Heart left ventricle (tissue), 16 donors: ENCODE measurements at regions of chr22 and their contacts with region 1.

Region 1: DNA sequence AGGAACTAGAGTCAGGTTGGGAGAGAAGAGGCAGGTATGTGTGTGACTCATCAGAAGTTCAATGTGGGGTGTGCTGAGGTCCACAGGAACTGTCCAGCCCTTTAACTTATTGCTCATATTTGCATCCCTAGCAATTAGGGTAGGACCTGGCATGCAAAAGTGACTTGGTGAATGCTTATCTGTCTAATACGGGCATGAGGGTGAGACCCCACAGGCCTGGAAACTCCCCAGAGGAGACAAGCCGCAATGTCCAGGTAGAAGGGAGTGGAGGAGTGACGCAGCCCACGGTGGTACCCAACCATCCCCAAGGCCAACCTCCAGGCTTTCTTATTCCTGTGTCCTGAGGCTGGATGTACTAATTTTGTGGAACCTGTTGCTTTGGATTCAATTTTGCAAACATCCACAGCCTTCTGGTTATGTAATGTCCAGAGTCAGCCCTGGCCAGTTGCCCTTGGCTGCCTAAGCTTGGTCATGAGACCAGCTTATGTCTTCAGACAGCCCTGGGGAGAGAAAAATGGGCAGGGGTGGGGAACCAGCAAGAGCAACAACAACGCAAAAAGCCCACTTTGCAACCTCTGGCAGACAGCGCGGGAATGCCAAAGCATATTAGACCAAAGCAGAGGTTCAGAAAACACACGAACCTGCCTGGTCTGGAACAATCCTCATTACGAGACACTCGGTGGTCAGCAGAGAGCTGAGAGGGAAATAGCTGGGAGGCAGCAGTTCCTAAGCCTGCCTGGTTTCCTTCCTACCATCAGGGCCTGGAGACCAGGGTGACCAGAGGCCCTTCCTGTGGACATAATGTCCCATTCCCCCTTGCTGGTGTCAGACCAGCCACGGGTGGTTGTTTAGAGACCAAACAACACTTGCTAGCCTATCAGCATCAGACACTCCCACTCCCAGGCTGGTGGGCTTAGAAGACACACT is 49.3 kb downstream of the TIMP3 start:
- DNase-seq: peak; percentile 67 to 89 (median 77)
- ATAC-seq: peak; percentile 23 to 53 (median 28)
- H3K4me3 ChIP-seq: no peak overlapping the region
- H3K27ac ChIP-seq: peak overlapping the region; percentile 69 to 94 (median 83)
- H3K4me1 ChIP-seq: peaks cover 41 to 100% (median 85%) of the 10 kb centered on the region in 12 donors
- H3K27me3 ChIP-seq: no peaks in the 10 kb centered on the region
- CTCF ChIP-seq: no peak
- POLR2A ChIP-seq: no peak

Region 2: GRCh38 chr22:32803020-32803754 is 47.7 kb before region 1 on chr22:
- intact Hi-C with region 1: loop called in 6 of 10 experiments (anchors 1 to 5 kb)
- DNase-seq: peak in 2 of 5 donors; percentile 54 to 61
- ATAC-seq: peak; percentile 20 to 40 (median 31)
- H3K4me3 ChIP-seq: peak overlapping the region; percentile 64 to 99 (median 94)
- H3K27ac ChIP-seq: peak overlapping the region; percentile 77 to 94 (median 92)
- H3K4me1 ChIP-seq: peaks cover 0 to 68% (median 44%) of the 10 kb centered on the region in 12 donors
- H3K27me3 ChIP-seq: peaks cover 0 to 14% (median 0%) of the 10 kb centered on the region in 9 donors
- CTCF ChIP-seq: no peak
- POLR2A ChIP-seq: no peak

Region 3: DNA sequence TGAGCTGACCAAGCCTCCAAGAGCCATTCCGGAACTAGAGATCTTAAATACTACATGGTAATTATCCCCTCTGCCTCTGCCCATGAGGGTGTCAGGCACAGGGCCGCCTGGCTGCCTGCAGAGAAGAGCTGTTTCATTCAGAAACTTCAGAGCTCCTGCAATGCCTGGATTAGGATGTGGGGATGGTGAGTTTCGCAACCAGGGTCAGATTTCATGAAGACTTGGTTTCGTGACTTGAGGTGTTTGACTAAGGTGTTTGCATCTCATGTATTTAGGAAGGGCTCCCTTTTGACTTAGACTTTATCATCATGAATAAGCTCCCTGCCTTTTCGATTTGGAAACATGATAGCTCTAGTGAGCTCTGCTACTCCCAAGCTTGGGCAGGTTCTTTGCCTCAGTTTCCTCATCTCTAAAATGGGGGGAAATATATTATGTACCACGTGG is 40.3 kb before region 1 on chr22:
- intact Hi-C with region 1: loop called in 1 of 10 experiments (anchors 2 kb)
- DNase-seq: no peak
- ATAC-seq: no peak
- H3K4me3 ChIP-seq: no peak overlapping the region
- H3K27ac ChIP-seq: peak overlapping the region in 10 of 12 donors; percentile 25 to 62 (median 47)
- H3K4me1 ChIP-seq: peaks cover 29 to 96% (median 86%) of the 10 kb centered on the region in 12 donors
- H3K27me3 ChIP-seq: no peaks in the 10 kb centered on the region
- CTCF ChIP-seq: no peak
- POLR2A ChIP-seq: no peak

Region 4: GRCh38 chr22:32830473-32830872 is 20.4 kb before region 1 on chr22:
- intact Hi-C with region 1: loop called in 2 of 10 experiments (anchors 2 kb)
- DNase-seq: peak; percentile 62 to 80 (median 72)
- ATAC-seq: peak; percentile 60 to 78 (median 63)
- H3K4me3 ChIP-seq: no peak overlapping the region
- H3K27ac ChIP-seq: peak overlapping the region; percentile 51 to 83 (median 70)
- H3K4me1 ChIP-seq: peaks cover 29 to 100% (median 89%) of the 10 kb centered on the region in 12 donors
- H3K27me3 ChIP-seq: no peaks in the 10 kb centered on the region
- CTCF ChIP-seq: no peak
- POLR2A ChIP-seq: no peak

Region 5: GRCh38 chr22:32880893-32881596 is 30.2 kb after region 1 on chr22:
- intact Hi-C with region 1: loop called in 1 of 10 experiments (anchors 2 kb)
- DNase-seq: peak; percentile 86 to 94 (median 92)
- ATAC-seq: peak; percentile 96 to 99 (median 98)
- H3K4me3 ChIP-seq: no peak overlapping the region
- H3K27ac ChIP-seq: peak overlapping the region in 11 of 12 donors; percentile 11 to 76 (median 49)
- H3K4me1 ChIP-seq: peaks cover 3 to 25% (median 13%) of the 10 kb centered on the region in 12 donors
- H3K27me3 ChIP-seq: no peaks in the 10 kb centered on the region
- CTCF ChIP-seq: no peak
- POLR2A ChIP-seq: no peak